Activated CD4-positive, alpha-beta T cell treated with anti-CD3 and anti-CD28 coated beads for 36 hours (primary cell): ENCODE measurements at regions of chr17 and their contacts with region 1.

Region 1: GRCh38 chr17:28849281-28849680 is 5.5 kb upstream of the ERAL1 start:
- DNase-seq: peak; percentile 46
- ATAC-seq: peak; percentile 75
- H3K4me3 Mint-ChIP-seq: no peak overlapping the region
- H3K27ac Mint-ChIP-seq: no peak overlapping the region
- H3K4me1 Mint-ChIP-seq: peaks cover 5% of the 10 kb centered on the region
- H3K27me3 Mint-ChIP-seq: no peaks in the 10 kb centered on the region

Region 2: GRCh38 chr17:28902819-28903545 is 53.7 kb after region 1 on chr17 and contains the start of gene DHRS13:
- CTCF ChIA-PET with region 1: interaction called, 11 read pairs
- POLR2A ChIA-PET with region 1: no interaction called
- intact Hi-C with region 1: loop called in 1 of 2 experiments (anchors 1 kb)
- DNase-seq: peak; percentile 97
- ATAC-seq: peak; percentile 89
- H3K4me3 Mint-ChIP-seq: peak within 1 kb of the TSS; percentile 87
- H3K27ac Mint-ChIP-seq: peak within 1 kb of the TSS; percentile 92
- H3K4me1 Mint-ChIP-seq: peaks cover 34% of the 10 kb centered on the region
- H3K27me3 Mint-ChIP-seq: no peaks in the 10 kb centered on the region
- total RNA-seq, gene DHRS13: 23.3 to 29.5 TPM

Region 3: GRCh38 chr17:29004081-29004692 is 154.9 kb after region 1 on chr17:
- CTCF ChIA-PET with region 1: no interaction called
- POLR2A ChIA-PET with region 1: no interaction called
- intact Hi-C with region 1: no loop called
- DNase-seq: no peak
- ATAC-seq: no peak
- H3K4me3 Mint-ChIP-seq: no peak overlapping the region
- H3K27ac Mint-ChIP-seq: no peak overlapping the region
- H3K4me1 Mint-ChIP-seq: peaks cover 2% of the 10 kb centered on the region
- H3K27me3 Mint-ChIP-seq: peaks cover 43% of the 10 kb centered on the region

Region 4: DNA sequence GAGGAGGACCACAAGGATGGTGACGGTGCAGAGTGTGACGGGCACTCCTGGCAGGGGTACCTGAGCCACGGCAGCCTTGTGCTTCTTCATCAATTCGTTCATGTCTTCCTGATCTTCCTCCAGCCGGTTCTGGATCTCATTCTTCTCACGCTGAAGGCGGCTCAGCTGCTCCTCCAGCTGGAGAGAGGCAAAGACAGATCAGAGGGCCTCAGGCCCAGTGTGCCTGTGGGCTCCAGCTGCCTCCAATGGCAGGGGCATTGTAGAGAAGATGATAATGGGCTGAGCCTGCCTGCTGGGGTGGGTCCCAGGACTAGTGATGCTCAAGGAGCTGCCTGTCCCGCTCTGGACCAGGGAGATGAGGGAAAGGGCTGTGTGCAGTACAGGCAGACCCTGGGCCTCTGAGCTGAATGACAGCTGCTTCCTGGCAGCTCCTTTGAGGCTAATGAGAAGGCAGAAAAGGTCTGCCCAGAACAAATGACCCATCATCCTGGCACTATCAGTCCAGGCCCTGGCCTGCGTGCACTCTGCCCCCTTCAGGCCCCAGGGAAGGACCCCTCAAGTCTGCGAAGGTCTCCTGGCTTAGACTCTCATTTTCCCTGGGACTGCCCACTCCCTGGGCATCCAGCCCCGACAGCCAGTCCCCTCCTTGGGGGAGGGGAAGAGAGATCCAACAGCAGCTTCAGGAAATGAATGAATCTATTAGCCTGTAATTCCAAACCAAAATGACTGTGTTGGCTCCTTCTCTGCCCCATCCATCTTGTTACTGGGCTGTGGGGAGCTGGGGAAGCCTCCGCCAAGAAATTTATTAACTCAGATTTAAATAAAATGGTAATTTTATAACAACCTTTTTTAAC is 241.7 kb after region 1 on chr17:
- CTCF ChIA-PET with region 1: no interaction called
- POLR2A ChIA-PET with region 1: no interaction called
- intact Hi-C with region 1: no loop called
- DNase-seq: no peak
- ATAC-seq: no peak
- H3K4me3 Mint-ChIP-seq: no peak overlapping the region
- H3K27ac Mint-ChIP-seq: no peak overlapping the region
- H3K4me1 Mint-ChIP-seq: no peaks in the 10 kb centered on the region
- H3K27me3 Mint-ChIP-seq: no peaks in the 10 kb centered on the region